Activated CD4-positive, alpha-beta T cell treated with anti-CD3 and anti-CD28 coated beads for 36 hours (primary cell): ENCODE measurements at regions of chr2 and their contacts with region 1.

Region 1: DNA sequence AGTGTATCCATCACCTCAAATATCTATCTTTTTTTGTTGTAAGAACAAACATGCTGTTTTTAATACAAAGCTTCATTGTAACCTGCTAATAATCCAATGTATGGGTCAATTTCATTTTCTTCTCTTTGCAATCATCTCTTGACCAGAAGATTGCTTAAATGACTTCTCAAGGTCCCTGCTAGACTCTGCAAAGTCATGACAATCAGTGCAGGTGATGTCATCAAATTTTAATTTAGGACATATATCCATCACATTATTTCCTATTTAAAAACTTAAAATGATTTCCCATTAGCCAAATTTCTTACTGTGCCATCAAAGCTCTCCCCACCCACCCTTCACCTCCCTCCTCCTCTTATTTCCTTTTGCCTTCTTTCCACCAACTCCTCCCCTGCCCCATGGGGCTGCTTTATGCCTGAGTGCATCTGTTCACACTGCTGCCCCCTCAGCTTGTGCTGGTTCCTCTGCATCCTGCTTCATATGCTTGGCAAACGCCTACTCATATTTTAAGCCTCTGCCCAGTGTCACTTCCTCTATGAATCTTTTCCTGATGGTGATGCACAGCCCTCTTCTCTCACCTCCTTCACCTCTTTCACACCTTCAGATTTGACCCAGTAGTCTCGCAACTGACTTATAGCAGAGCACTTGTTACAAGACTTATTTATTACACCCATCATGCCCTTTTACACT is 20.3 kb downstream of the PLEK start:
- DNase-seq: peak; percentile 59
- ATAC-seq: peak; percentile 74
- H3K4me3 Mint-ChIP-seq: no peak overlapping the region
- H3K27ac Mint-ChIP-seq: no peak overlapping the region
- H3K4me1 Mint-ChIP-seq: peaks cover 35% of the 10 kb centered on the region
- H3K27me3 Mint-ChIP-seq: no peaks in the 10 kb centered on the region

Region 2: GRCh38 chr2:68423966-68424650 is 38.7 kb after region 1 on chr2:
- CTCF ChIA-PET with region 1: no interaction called
- POLR2A ChIA-PET with region 1: no interaction called
- intact Hi-C with region 1: loop called (anchors 1 to 2 kb)
- DNase-seq: no peak
- ATAC-seq: peak; percentile 93
- H3K4me3 Mint-ChIP-seq: no peak overlapping the region
- H3K27ac Mint-ChIP-seq: no peak overlapping the region
- H3K4me1 Mint-ChIP-seq: peaks cover 4% of the 10 kb centered on the region
- H3K27me3 Mint-ChIP-seq: peaks cover 2% of the 10 kb centered on the region

Region 3: GRCh38 chr2:68516051-68516955 is 130.9 kb after region 1 on chr2:
- CTCF ChIA-PET with region 1: no interaction called
- POLR2A ChIA-PET with region 1: no interaction called
- intact Hi-C with region 1: no loop called
- DNase-seq: no peak
- ATAC-seq: peak; percentile 52
- H3K4me3 Mint-ChIP-seq: no peak overlapping the region
- H3K27ac Mint-ChIP-seq: no peak overlapping the region
- H3K4me1 Mint-ChIP-seq: peaks cover 7% of the 10 kb centered on the region
- H3K27me3 Mint-ChIP-seq: no peaks in the 10 kb centered on the region